H1 (cell line): ENCODE measurements at regions of chr3 and their contacts with region 1.

Region 1: DNA sequence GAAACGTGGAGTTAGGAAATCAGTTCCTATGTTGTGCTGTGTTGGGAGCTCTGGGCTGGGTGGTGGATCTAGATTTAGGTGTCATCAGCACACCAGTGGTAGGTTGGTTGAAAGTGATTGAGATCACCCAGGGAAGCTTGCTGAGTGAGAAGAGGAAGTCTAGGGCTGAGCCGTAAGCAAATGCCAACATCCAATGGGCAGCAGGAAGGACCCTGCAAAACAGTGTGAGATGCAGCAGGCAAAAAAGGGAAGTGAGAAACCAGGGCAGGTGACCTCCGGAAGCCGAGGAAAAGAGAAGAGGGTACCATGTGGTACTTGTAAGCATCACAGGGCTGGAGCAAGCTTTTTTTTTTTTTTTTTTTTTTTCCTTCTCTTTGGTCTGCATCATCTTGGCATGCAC is 15.9 kb upstream of the COPG1 start:
- DNase-seq: no peak
- H3K4me3 ChIP-seq: no peak overlapping the region
- H3K27ac ChIP-seq: no peak overlapping the region
- H3K4me1 ChIP-seq: peaks cover 0 to 6% (median 6%) of the 10 kb centered on the region in 4 experiments; a peak in 6 of 7 replicates
- H3K27me3 ChIP-seq: no peaks in the 10 kb centered on the region; a peak in 1 of 7 replicates
- CTCF ChIP-seq: no peak
- EP300 ChIP-seq: no peak
- POLR2A ChIP-seq: no peak
- RAD21 ChIP-seq: no peak

Region 2: DNA sequence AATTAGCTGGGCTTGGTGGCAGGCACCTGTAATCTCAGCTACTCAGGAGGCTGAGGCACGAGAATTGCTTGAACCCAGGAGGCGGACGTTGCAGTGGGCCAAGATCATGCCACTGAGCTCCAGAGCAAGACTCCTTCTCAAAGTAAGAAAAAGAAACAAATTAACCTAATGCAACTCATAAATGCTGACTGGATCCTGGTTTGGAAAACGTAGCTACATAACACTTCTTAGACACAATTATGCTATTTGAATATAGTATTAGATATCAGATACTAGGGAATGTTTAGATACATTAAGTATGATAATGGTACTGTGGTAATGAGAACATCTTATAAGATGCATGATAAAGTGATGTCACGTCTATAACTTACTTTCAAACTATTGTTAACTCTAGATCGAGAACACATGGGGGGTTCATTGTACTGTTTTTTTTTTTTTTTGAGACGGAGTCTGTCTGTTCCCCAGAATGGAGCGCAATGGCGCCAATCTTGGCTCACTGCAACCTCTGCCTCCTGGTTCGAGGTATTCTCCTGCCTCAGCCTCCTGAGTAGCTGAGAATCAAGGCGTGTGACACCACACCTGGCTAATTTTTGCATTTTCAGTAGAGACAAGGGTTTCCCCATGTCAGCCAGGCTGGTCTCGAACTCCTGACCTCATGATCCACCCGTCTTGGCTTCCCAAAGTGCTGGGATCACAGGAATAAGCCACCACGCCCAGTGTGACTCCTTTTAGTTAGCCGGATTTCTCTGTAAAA is 66.8 kb before region 1 on chr3:
- CTCF ChIA-PET with region 1: interaction called, 5 read pairs
- POLR2A ChIA-PET with region 1: interaction called, 14 read pairs
- DNase-seq: no peak
- H3K4me3 ChIP-seq: no peak overlapping the region
- H3K27ac ChIP-seq: no peak overlapping the region
- H3K4me1 ChIP-seq: peaks cover 0 to 3% (median 1%) of the 10 kb centered on the region in 4 experiments; a peak in 4 of 7 replicates
- H3K27me3 ChIP-seq: no peaks in the 10 kb centered on the region
- CTCF ChIP-seq: no peak
- EP300 ChIP-seq: no peak
- POLR2A ChIP-seq: peak in 1 of 2 experiments; percentile 15; a peak in 1 of 3 replicates
- RAD21 ChIP-seq: no peak

Region 3: GRCh38 chr3:129304146-129304961 is 70.8 kb after region 1 on chr3:
- CTCF ChIA-PET with region 1: no interaction called
- POLR2A ChIA-PET with region 1: no interaction called
- DNase-seq: no peak
- H3K4me3 ChIP-seq: no peak overlapping the region; a peak in 1 of 8 replicates
- H3K27ac ChIP-seq: peak overlapping the region; percentile 65; the same call in 1 of the 2 replicates
- H3K4me1 ChIP-seq: peaks cover 3 to 8% (median 5%) of the 10 kb centered on the region in 4 experiments
- H3K27me3 ChIP-seq: no peaks in the 10 kb centered on the region
- CTCF ChIP-seq: no peak
- EP300 ChIP-seq: no peak
- POLR2A ChIP-seq: no peak
- RAD21 ChIP-seq: no peak